Head of caudate nucleus (tissue), 42 donors: ENCODE measurements at regions of chr16 and their contacts with region 1.

Region 1: DNA sequence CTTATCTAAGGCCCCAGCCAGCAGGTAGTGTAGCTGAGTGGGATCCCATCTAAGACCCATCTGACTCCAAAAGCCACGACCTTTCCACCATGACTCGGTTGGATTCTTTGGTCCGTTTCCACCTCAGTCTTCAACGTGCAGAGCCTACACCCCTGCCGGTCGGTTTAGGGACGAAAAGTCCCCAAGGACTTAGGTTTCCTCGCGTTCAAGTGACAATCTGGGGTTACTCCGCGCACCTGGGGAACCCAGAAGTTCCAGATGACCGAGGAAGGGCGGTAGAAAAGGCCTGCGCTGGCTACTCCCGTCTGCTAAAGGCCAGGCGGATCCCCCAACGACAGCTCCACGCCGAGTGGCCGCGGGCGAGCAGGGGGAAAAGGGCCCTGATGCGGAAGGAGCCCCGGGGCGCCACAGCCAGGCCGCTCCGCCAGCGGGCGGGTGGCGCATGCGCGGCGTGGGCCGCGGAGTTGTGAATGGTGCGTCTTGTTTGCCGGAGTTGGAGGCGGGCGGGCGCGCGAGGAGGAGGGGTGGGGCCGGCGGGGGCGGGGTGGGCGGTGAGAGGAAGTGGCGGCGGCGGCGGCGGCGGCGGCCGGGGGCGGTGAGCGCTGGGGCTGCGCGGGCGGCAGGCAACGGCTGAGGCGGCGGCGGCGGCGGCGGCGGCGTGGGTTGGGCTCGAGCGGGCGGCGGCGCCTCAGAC is at the start of gene CBFB:
- DNase-seq: peak; percentile 73 to 96 (median 92)

Region 2: GRCh38 chr16:66961065-66961744 is 67.5 kb before region 1 on chr16 and contains the start of gene CES3:
- intact Hi-C with region 1: loop called (anchors 10 kb)
- DNase-seq: peak; percentile 31 to 84 (median 70)

Region 3: DNA sequence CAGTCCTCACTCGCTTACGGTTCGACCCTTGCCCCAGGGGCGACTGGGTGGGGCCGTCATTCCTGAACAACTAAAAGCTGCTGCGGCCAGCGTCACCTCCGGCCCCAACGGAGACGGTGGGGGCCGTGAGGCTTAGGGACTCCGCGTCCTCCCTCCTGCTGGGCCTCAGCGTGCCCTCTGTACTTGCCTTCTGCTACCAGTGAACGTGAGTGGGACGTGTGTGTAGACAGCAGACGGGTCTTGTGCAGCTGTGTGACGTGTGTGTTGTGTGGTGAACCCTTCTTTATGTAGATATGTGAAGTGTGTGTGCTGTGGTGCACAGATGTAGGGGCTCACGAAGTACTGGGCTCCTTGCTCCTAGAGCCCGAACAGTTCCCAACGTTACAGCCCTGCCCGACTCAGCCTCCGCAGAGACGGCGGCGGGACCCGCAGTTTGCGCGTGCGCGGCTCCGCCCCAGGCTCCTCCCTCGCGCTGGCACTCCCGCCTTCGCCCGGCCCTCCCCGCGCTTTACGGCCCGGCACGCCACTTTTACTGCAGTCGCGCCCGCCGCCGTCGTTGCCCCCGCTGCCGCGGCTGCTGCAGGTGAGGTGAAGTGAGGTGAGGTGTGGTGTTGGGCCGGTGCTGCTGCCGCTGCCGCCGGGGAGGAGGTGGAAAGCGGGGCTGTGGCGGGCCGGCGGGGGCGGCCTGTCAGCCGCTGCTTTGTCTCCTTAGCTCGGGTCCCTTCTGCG is 80.9 kb after region 1 on chr16 and contains the start of gene PHAF1:
- intact Hi-C with region 1: loop called (anchors 2 kb)
- DNase-seq: peak; percentile 88 to 99 (median 97)